H1 (cell line): ENCODE measurements at regions of chr3 and their contacts with region 1.

Region 1: GRCh38 chr3:138329127-138329983 is at the start of gene NME9:
- DNase-seq: peak; percentile 93 to 99
- H3K4me3 ChIP-seq: peak within 1 kb of the TSS; percentile 41 to 83 (median 79)
- H3K27ac ChIP-seq: no peak within 1 kb of the TSS
- H3K4me1 ChIP-seq: peaks cover 0 to 4% (median 2%) of the 10 kb centered on the region in 4 experiments; a peak in 2 of 7 replicates
- H3K27me3 ChIP-seq: no peaks in the 10 kb centered on the region
- CTCF ChIP-seq: peak; percentile 62 to 79 (median 75)
- EP300 ChIP-seq: no peak
- POLR2A ChIP-seq: no peak
- RAD21 ChIP-seq: peak; percentile 47 to 65
- total RNA-seq, gene NME9: not detected in 2 replicates

Region 2: GRCh38 chr3:138118612-138119422 is 210.5 kb before region 1 on chr3:
- CTCF ChIA-PET with region 1: no interaction called
- POLR2A ChIA-PET with region 1: no interaction called
- DNase-seq: peak in 1 of 2 experiments; percentile 94
- H3K4me3 ChIP-seq: no peak overlapping the region
- H3K27ac ChIP-seq: no peak overlapping the region
- H3K4me1 ChIP-seq: peaks cover 2 to 9% (median 5%) of the 10 kb centered on the region in 4 experiments; a peak in 4 of 7 replicates
- H3K27me3 ChIP-seq: no peaks in the 10 kb centered on the region
- CTCF ChIP-seq: peak; percentile 66 to 95 (median 87)
- EP300 ChIP-seq: no peak
- POLR2A ChIP-seq: no peak
- RAD21 ChIP-seq: peak; percentile 88 to 92

Region 3: DNA sequence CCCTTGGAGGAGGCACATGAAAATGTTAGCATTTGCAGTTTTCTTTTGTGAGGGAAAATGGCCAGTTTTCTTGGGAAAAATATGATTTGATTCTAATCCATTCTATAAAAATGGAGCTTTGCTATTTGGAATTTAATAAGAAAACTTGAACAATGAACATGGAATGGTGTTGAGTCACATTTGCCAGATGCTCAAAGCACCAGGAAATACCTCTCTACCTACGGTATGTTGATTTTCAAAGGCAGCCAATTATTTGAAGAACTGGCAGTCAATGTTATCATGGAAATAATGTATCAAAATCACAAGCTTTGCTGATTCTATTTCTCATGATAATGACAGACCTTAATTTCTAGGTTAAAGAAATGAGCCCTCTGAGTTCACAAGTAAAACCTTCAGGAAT is 14.6 kb before region 1 on chr3:
- CTCF ChIA-PET with region 1: interaction called, 20 read pairs
- POLR2A ChIA-PET with region 1: interaction called, 3 read pairs
- DNase-seq: no peak
- H3K4me3 ChIP-seq: no peak overlapping the region
- H3K27ac ChIP-seq: no peak overlapping the region
- H3K4me1 ChIP-seq: no peaks in the 10 kb centered on the region
- H3K27me3 ChIP-seq: no peaks in the 10 kb centered on the region
- CTCF ChIP-seq: no peak
- EP300 ChIP-seq: no peak
- POLR2A ChIP-seq: no peak
- RAD21 ChIP-seq: no peak

Region 4: DNA sequence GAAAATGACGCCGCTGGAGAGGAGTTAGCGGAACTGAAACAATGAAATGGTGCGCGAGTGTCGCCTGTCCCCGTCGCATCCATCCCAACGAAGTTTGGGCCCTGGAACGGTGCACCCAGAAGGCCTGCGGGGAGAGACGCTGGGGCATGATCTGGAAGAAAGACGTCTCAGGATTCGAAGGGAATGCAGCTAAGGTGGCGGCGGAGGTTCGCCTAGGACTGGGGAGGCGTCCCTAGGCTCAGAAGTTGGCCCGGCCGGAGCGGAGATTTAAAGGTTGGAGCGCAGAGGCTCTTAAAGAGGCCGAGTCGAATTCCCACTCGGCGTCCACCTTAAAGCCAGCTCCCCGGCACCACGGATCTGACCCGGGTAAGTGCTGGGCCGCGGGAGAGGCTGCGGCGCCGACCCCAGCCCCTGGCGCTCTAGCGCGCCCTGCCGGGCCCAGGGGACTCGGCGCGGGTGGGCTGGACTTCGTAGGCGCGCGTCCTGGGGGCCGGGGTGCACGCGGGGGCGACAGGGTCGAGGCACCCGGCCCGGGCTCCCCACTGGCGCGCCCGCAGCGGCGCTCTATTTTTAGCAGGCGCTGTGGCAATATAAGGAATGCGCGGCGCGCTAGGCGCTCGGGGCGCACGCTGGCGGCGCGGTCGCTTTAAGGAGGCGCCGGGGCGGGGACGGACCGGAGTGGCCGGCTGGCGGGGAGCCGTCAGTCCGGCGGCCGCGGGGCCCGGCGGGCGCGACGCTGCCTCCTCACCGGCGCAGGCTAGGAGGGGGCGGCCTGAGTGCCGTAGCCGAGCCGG is 18.8 kb after region 1 on chr3 and contains the start of gene MRAS:
- CTCF ChIA-PET with region 1: interaction called, 66 read pairs
- POLR2A ChIA-PET with region 1: interaction called, 5 read pairs
- DNase-seq: peak; percentile 46 to 85
- H3K4me3 ChIP-seq: peak within 1 kb of the TSS; percentile 54 to 87 (median 61)
- H3K27ac ChIP-seq: no peak within 1 kb of the TSS; the same call in 1 of the 2 replicates
- H3K4me1 ChIP-seq: peaks cover 0 to 10% (median 4%) of the 10 kb centered on the region in 4 experiments; a peak in 3 of 7 replicates
- H3K27me3 ChIP-seq: peaks cover 0 to 13% (median 4%) of the 10 kb centered on the region in 4 experiments; a peak in 3 of 7 replicates
- CTCF ChIP-seq: peak; percentile 44 to 65 (median 50)
- EP300 ChIP-seq: no peak
- POLR2A ChIP-seq: peak in 1 of 2 experiments; percentile 49; a peak in 2 of 3 replicates
- RAD21 ChIP-seq: peak; percentile 49 to 66
- total RNA-seq, gene MRAS: 15.6 and 16.2 TPM in 2 replicates

Region 5: DNA sequence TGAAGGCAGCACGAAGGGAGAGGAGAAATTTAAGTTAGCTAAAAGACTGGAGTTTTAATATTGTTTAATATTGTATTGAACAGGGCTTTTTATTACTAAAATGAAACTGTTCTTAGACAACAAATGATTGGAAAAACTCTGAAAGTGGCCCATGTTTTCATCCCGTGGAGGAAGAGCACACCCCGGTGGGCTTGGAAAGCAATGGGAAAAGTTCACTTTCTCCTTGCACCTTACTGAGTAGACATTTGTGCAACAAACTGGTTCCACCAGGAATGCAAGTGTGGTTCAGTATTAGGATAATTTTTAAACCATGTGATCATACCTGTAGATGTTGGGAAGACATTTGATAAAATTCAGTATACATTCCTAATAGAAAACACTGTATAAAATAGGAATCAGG is 96.9 kb after region 1 on chr3:
- CTCF ChIA-PET with region 1: interaction called, 47 read pairs
- POLR2A ChIA-PET with region 1: no interaction called
- DNase-seq: no peak
- H3K4me3 ChIP-seq: no peak overlapping the region
- H3K27ac ChIP-seq: no peak overlapping the region
- H3K4me1 ChIP-seq: peaks cover 0 to 4% (median 0%) of the 10 kb centered on the region in 4 experiments; a peak in 1 of 7 replicates
- H3K27me3 ChIP-seq: no peaks in the 10 kb centered on the region
- CTCF ChIP-seq: peak; percentile 42 to 68 (median 62)
- EP300 ChIP-seq: no peak
- POLR2A ChIP-seq: no peak
- RAD21 ChIP-seq: peak; percentile 87 to 88